ENCODE measurements at regions of chr1 and their contacts with region 1.

Region 1: DNA sequence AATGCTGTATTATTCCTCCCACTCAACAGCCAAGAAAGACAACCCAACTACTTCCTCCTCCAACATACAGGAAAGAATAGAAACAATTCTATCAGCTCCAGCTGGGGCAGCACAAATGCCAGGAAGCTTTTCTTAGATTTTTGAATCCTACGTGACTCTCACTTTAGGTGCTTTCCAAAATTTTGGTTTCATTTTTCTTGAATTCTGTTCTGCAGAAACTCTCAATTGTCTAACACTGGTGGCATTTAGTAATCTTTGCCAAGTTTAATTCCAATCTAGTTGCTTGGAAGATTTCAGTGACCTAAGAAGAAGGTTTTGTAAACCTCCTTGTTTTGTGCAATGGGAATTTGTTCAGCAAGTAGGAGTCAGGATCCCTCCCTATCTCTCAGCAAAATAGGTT is 37.1 kb upstream of the DOCK7 start:
- DNase-seq: no peak
- H3K4me3 ChIP-seq: no peak overlapping the region
- H3K4me3 Mint-ChIP-seq: no peak overlapping the region
- H3K27ac Mint-ChIP-seq: peak overlapping the region; percentile 90
- H3K4me1 ChIP-seq: peaks cover 28% of the 10 kb centered on the region
- H3K4me1 Mint-ChIP-seq: peaks cover 38% of the 10 kb centered on the region
- H3K27me3 ChIP-seq: no peaks in the 10 kb centered on the region
- H3K27me3 Mint-ChIP-seq: no peaks in the 10 kb centered on the region
- CTCF ChIP-seq: no peak

Region 2: DNA sequence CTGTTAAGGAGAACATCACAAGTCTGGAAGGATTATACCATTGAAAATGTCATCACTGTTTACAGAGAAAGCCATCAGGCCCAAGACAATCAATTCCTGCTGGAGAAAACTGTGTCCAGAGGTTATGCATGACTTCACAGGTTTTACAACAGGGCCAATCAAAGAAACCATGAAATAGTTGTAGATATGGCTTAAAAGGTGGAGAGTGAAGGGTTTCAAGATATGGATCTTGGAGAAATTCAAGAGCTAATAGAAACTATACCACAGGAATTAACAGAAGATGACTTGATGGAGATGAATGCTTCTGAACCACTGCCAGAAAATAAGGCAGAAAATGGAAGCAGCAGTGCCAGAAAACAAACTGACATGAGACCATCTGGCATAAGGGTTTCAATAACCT is 258.2 kb before region 1 on chr1:
- CTCF ChIA-PET with region 1: no interaction called
- POLR2A ChIA-PET with region 1: interaction called, 10 read pairs
- intact Hi-C with region 1: no loop called
- DNase-seq: no peak
- H3K4me3 ChIP-seq: no peak overlapping the region
- H3K4me3 Mint-ChIP-seq: no peak overlapping the region
- H3K27ac Mint-ChIP-seq: no peak overlapping the region
- H3K4me1 ChIP-seq: no peaks in the 10 kb centered on the region
- H3K4me1 Mint-ChIP-seq: no peaks in the 10 kb centered on the region
- H3K27me3 ChIP-seq: no peaks in the 10 kb centered on the region
- H3K27me3 Mint-ChIP-seq: no peaks in the 10 kb centered on the region
- CTCF ChIP-seq: no peak

Region 3: GRCh38 chr1:62691062-62691844 is 34.0 kb before region 1 on chr1:
- CTCF ChIA-PET with region 1: no interaction called
- POLR2A ChIA-PET with region 1: no interaction called
- intact Hi-C with region 1: loop called (anchors 5 kb)
- DNase-seq: no peak
- H3K4me3 ChIP-seq: peak overlapping the region; percentile 80
- H3K4me3 Mint-ChIP-seq: peak overlapping the region; percentile 94
- H3K27ac Mint-ChIP-seq: peak overlapping the region; percentile 55
- H3K4me1 ChIP-seq: peaks cover 13% of the 10 kb centered on the region; the same call in 1 of the 2 replicates
- H3K4me1 Mint-ChIP-seq: peaks cover 16% of the 10 kb centered on the region
- H3K27me3 ChIP-seq: no peaks in the 10 kb centered on the region
- H3K27me3 Mint-ChIP-seq: no peaks in the 10 kb centered on the region
- CTCF ChIP-seq: no peak

Measured in Caco-2 (cell line).